ENCODE measurements at regions of chr17 and their contacts with region 1.

Region 1: GRCh38 chr17:80132906-80133625 is 13.9 kb downstream of the EIF4A3 start:
- DNase-seq: peak in 1 of 4 experiments; percentile 10
- ATAC-seq: peak; percentile 62
- H3K4me3 ChIP-seq: no peak overlapping the region
- H3K27ac ChIP-seq: no peak overlapping the region
- H3K4me1 ChIP-seq: no peaks in the 10 kb centered on the region
- H3K27me3 ChIP-seq: peaks cover 0 to under 1% of the 10 kb centered on the region in 2 experiments; a peak in 2 of 5 replicates
- CTCF ChIP-seq: no peak
- EP300 ChIP-seq: no peak
- POLR2A ChIP-seq: peak; percentile 44; the same call in 1 of the 2 replicates
- RAD21 ChIP-seq: no peak

Region 2: DNA sequence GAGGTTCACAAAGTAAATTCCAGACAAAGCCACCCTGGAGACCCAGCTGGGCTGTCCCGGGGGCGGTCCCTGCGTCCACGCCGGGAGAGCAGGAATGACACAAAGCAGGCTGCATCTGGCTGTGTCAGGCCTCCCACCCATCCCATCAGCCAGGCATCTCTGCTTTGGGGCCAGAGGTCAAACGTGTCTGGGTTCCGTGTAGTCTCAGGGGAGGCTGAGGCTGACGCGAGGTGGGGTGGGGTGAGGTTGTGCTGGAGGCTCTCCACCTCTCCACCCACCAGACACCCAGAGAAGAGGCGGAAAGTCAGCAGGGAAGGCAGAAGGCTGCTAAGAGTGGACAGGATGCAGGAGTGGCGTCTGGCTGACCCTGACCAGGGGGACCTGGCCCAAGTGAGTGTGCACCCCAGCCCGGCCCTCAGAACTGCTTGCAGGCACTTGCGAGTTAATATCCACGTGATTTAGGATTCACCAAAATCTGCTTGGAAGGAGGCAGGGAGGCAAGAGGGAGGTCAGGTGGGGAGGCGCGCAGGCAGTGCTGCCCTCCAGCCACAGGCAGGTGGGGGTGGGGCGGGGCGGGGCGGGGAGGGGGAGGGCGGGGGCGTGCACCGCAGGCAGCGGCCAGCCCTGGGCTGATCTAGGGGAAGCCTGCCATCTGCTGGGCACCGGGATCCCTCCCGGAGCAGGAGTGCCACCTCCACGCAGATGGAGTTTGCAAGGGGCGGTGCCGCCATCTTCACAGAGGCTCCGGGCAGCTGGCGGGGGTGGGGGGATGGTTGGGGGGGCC is 141.7 kb before region 1 on chr17:
- CTCF ChIA-PET with region 1: no interaction called
- POLR2A ChIA-PET with region 1: no interaction called
- in situ Hi-C with region 1: no loop called
- intact Hi-C with region 1: no loop called
- DNase-seq: peak; percentile 73 to 92 (median 89)
- ATAC-seq: peak; percentile 91
- H3K4me3 ChIP-seq: no peak overlapping the region
- H3K27ac ChIP-seq: no peak overlapping the region
- H3K4me1 ChIP-seq: peaks cover 16 to 38% of the 10 kb centered on the region in 2 experiments
- H3K27me3 ChIP-seq: peaks cover 42 to 69% of the 10 kb centered on the region in 2 experiments
- CTCF ChIP-seq: peak in 2 of 3 experiments; percentile 58 to 66; a peak in 4 of 6 replicates
- EP300 ChIP-seq: no peak
- POLR2A ChIP-seq: no peak
- RAD21 ChIP-seq: peak in 1 of 2 experiments; percentile 50; a peak in 2 of 4 replicates

Region 3: GRCh38 chr17:80147035-80147836 is 14.2 kb after region 1 on chr17 and contains the start of gene EIF4A3:
- CTCF ChIA-PET with region 1: no interaction called
- POLR2A ChIA-PET with region 1: interaction called, 38 read pairs
- in situ Hi-C with region 1: no loop called
- intact Hi-C with region 1: no loop called
- DNase-seq: peak; percentile 90 to 99 (median 95)
- ATAC-seq: peak; percentile 96
- H3K4me3 ChIP-seq: peak within 1 kb of the TSS; percentile 95
- H3K27ac ChIP-seq: peak within 1 kb of the TSS; percentile 86
- H3K4me1 ChIP-seq: peaks cover 13 to 17% of the 10 kb centered on the region in 2 experiments; a peak in 4 of 5 replicates
- H3K27me3 ChIP-seq: no peaks in the 10 kb centered on the region
- CTCF ChIP-seq: no peak; a peak in 1 of 6 replicates
- EP300 ChIP-seq: no peak
- POLR2A ChIP-seq: peak; percentile 91
- RAD21 ChIP-seq: no peak
- polyA plus RNA-seq, gene EIF4A3: 62.7 to 67.0 TPM